ENCODE measurements at regions of chr20 and their contacts with region 1.

Region 1: GRCh38 chr20:58980700-58981627 is at the start of gene NELFCD:
- DNase-seq: peak; percentile 56 to 87 (median 72)
- H3K4me3 ChIP-seq: peak within 1 kb of the TSS; percentile 57 to 92 (median 77)
- H3K27ac ChIP-seq: peak within 1 kb of the TSS in 58 of 59 donors; percentile 14 to 94 (median 82)
- H3K27me3 ChIP-seq: no peaks in the 10 kb centered on the region
- CTCF ChIP-seq: peak in 2 of 56 donors; percentile 7 to 9
- total RNA-seq, gene NELFCD: 46.8 to 90.1 (median 64.8) TPM

Region 2: GRCh38 chr20:58888521-58889333 is 92.2 kb before region 1 on chr20:
- intact Hi-C with region 1: loop called (anchors 1 to 2 kb)
- DNase-seq: peak; percentile 45 to 86 (median 74)
- H3K4me3 ChIP-seq: peak overlapping the region; percentile 23 to 85 (median 67)
- H3K27ac ChIP-seq: peak overlapping the region in 26 of 59 donors; percentile 2 to 99 (median 78)
- H3K27me3 ChIP-seq: no peaks in the 10 kb centered on the region
- CTCF ChIP-seq: no peak

Region 3: GRCh38 chr20:59385480-59385879 is 404.5 kb after region 1 on chr20:
- intact Hi-C with region 1: no loop called
- DNase-seq: no peak
- H3K4me3 ChIP-seq: no peak overlapping the region
- H3K27ac ChIP-seq: no peak overlapping the region
- H3K27me3 ChIP-seq: peaks cover 0 to 41% (median 4%) of the 10 kb centered on the region in 45 donors
- CTCF ChIP-seq: no peak

Region 4: GRCh38 chr20:59611269-59611668 is 630.3 kb after region 1 on chr20:
- intact Hi-C with region 1: no loop called
- DNase-seq: peak in 5 of 10 donors; percentile 42 to 83 (median 70)
- H3K4me3 ChIP-seq: no peak overlapping the region
- H3K27ac ChIP-seq: peak overlapping the region in 48 of 59 donors; percentile 1 to 98 (median 54)
- H3K27me3 ChIP-seq: no peaks in the 10 kb centered on the region
- CTCF ChIP-seq: no peak

Measured in dorsolateral prefrontal cortex (tissue), 120 donors.